ENCODE measurements at regions of chr22 and their contacts with region 1.

Region 1: GRCh38 chr22:31977141-31977841 is 33.0 kb downstream of the YWHAH start:
- DNase-seq: peak; percentile 72
- H3K4me3 ChIP-seq: no peak overlapping the region
- H3K27ac ChIP-seq: no peak overlapping the region
- H3K4me1 ChIP-seq: no peaks in the 10 kb centered on the region
- H3K27me3 ChIP-seq: no peaks in the 10 kb centered on the region
- CTCF ChIP-seq: peak; percentile 78 to 86

Region 2: DNA sequence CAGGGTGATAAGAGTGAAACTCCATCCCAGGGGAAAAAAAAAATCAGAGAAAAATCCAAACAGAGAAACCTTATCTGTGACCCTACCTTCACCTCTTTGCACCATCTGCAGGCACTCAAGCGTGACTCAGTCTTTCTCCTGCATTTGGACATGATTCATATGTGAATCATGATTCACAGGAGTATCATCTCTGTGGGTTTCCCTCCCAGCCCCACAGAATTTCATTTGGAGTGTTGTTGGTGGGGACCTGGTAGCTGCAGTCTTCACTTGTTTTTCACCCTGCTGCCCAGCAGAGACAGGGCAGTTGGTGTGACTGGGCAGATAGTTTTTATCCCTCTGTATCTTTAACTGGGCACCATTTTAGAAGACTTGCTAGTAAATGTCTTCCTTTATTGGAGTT is 147.8 kb before region 1 on chr22:
- CTCF ChIA-PET with region 1: no interaction called
- dilution Hi-C with region 1: no loop called
- in situ Hi-C with region 1: no loop called
- intact Hi-C with region 1: no loop called
- DNase-seq: peak; percentile 98
- H3K4me3 ChIP-seq: no peak overlapping the region
- H3K27ac ChIP-seq: peak overlapping the region; percentile 93
- H3K4me1 ChIP-seq: peaks cover 36% of the 10 kb centered on the region
- H3K27me3 ChIP-seq: no peaks in the 10 kb centered on the region
- CTCF ChIP-seq: no peak

Region 3: DNA sequence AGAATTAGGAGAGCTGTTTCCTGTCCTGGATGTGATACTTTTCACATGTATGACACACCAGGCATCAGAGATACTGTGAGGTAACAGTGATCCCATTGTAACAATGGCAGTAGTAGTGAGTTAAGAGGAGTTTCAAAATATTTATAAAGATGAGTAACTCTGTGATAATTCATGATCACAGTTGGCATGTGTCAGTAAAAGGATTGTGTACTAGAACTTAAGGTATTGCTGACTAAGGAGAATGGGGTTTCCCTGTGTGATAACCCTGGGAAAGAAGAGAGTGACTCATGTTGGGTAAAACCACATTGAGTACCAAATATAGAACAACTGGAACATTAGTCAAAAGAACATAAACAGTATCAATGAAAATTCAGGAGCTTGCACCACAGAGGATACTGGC is 42.8 kb after region 1 on chr22:
- CTCF ChIA-PET with region 1: no interaction called
- dilution Hi-C with region 1: no loop called
- in situ Hi-C with region 1: no loop called
- intact Hi-C with region 1: loop called (anchors 5 kb)
- DNase-seq: peak; percentile 100
- H3K4me3 ChIP-seq: no peak overlapping the region
- H3K27ac ChIP-seq: peak overlapping the region; percentile 79
- H3K4me1 ChIP-seq: peaks cover 19% of the 10 kb centered on the region
- H3K27me3 ChIP-seq: no peaks in the 10 kb centered on the region
- CTCF ChIP-seq: no peak

Region 4: DNA sequence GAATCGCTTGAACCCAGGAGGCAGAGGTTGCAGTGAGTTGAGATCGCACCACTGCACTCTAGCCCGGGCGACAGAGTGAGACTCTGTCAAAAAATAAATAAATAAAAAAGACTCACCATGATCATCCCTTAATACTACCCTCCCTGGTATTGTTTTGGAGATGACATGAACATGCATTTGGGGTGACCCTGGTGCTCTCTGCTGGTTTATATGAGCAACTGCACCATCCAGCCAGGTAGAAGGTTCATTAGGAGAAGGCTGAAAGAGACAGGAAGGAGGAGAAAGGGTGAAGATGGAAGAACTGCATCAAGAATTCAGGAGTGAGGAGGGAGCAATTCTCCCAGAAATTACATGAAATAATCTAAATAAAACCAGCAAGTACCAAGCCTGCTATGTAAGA is 103.6 kb after region 1 on chr22:
- CTCF ChIA-PET with region 1: interaction called, 8 read pairs
- dilution Hi-C with region 1: no loop called
- in situ Hi-C with region 1: loop called (anchors 5 kb)
- intact Hi-C with region 1: loop called (anchors 1 kb)
- DNase-seq: peak; percentile 66
- H3K4me3 ChIP-seq: no peak overlapping the region
- H3K27ac ChIP-seq: no peak overlapping the region
- H3K4me1 ChIP-seq: peaks cover 12% of the 10 kb centered on the region
- H3K27me3 ChIP-seq: no peaks in the 10 kb centered on the region
- CTCF ChIP-seq: peak; percentile 89 to 93

Region 5: GRCh38 chr22:32265882-32266767 is 288.8 kb after region 1 on chr22:
- CTCF ChIA-PET with region 1: no interaction called
- dilution Hi-C with region 1: no loop called
- in situ Hi-C with region 1: no loop called
- intact Hi-C with region 1: loop called (anchors 2 kb)
- DNase-seq: peak; percentile 44
- H3K4me3 ChIP-seq: no peak overlapping the region
- H3K27ac ChIP-seq: no peak overlapping the region
- H3K4me1 ChIP-seq: no peaks in the 10 kb centered on the region
- H3K27me3 ChIP-seq: no peaks in the 10 kb centered on the region
- CTCF ChIP-seq: peak; percentile 90 to 92

Region 6: DNA sequence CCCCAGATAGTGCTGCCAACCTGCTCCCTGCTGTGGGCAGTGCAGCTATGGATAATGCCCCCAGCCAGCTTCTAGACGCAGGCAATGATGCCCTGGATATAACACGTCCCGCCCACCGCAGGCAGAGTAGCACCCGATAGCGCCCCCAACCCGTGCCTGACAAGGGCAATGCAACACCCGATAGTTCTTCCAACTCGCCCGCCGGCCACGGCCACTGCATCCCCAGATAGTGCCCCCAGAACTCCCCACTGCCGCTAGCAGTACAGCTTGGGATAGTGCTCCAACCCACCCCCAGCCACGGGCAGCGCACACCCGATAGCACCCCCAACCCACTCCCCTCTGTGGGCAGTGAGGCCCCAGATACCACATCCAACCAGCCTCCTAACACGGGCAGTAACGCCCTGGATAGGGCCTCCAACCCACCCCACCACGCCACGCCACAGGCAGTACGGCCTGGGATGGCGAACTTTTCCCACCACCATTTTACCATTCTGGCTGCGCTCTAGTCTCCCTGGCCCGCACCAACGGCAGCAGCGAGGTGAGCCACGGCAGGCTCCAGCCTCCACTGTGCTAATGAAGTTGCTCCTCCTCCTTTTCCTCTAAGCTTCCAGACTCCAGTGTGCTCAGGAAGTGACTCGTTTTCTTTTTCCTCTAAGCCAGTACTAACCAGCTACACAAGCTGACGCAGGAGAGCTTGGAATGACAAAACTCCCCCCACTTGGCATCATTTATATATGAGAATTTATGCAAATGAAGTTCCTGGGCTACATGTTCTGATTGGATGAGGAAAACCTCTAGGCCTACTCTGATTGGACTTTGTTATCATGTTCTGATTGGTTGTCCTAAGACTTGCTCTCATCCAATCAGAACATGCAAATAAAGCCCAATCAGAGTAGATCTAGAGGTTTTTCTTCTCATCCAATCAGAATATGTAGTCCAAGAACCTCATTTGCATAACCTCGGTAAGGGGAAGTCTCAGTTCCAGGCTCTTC is 377.4 kb after region 1 on chr22:
- CTCF ChIA-PET with region 1: interaction called, 3 read pairs
- dilution Hi-C with region 1: no loop called
- in situ Hi-C with region 1: no loop called
- intact Hi-C with region 1: loop called (anchors 5 kb)
- DNase-seq: peak; percentile 21
- H3K4me3 ChIP-seq: no peak overlapping the region
- H3K27ac ChIP-seq: no peak overlapping the region
- H3K4me1 ChIP-seq: no peaks in the 10 kb centered on the region
- H3K27me3 ChIP-seq: no peaks in the 10 kb centered on the region
- CTCF ChIP-seq: no peak

Region 7: GRCh38 chr22:32378707-32379272 is 401.5 kb after region 1 on chr22:
- CTCF ChIA-PET with region 1: no interaction called
- dilution Hi-C with region 1: no loop called
- in situ Hi-C with region 1: no loop called
- intact Hi-C with region 1: loop called (anchors 1 kb)
- DNase-seq: peak; percentile 31
- H3K4me3 ChIP-seq: no peak overlapping the region
- H3K27ac ChIP-seq: no peak overlapping the region
- H3K4me1 ChIP-seq: no peaks in the 10 kb centered on the region
- H3K27me3 ChIP-seq: no peaks in the 10 kb centered on the region
- CTCF ChIP-seq: peak; percentile 75 to 86